Activated naive CD4-positive, alpha-beta T cell treated with anti-CD3 and anti-CD28 coated beads for 36 hours (primary cell): ENCODE measurements at regions of chr14 and their contacts with region 1.

Region 1: DNA sequence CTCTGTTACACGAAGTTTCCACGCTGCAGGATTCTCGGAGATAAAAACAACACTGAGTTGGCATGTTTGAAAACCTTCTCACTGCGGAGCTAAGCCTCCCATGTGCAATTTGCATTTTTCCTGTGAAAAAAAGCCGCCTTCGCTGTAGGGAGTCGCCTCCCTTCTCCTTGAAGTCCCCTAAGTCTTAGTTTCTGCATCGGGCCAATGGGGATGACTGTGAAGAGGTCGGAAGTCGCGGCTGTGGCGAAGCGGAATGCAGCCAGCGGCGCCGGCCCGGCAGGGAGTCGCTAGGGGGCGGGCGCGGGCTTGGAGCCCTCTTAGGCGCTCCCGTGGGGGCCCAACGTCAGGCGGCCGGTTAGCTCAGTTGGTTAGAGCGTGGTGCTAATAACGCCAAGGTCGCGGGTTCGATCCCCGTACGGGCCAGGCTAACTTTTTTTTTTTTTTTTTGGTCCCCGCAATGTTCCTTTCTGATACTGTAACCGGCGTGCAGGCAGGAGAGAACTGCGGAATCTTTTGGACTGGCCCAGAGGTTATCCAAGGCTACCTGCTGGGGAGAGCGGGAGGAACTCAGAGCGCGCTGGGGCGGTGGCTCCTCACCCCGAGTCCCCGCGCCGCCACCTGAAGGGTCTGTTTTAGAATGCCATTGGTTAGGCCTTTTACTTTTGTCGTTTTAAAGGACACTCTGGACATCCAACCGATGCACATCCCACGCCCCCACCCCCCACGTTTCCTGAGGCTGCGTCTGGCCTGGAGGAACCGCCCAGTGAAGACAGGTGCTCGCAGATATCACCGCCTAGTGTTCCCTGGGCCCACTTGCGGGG is 2.6 kb upstream of the ZNF839 start:
- DNase-seq: peak; percentile 95
- H3K4me3 Mint-ChIP-seq: peak overlapping the region; percentile 95
- H3K27ac Mint-ChIP-seq: peak overlapping the region; percentile 98
- H3K4me1 Mint-ChIP-seq: peaks cover 56% of the 10 kb centered on the region
- H3K27me3 Mint-ChIP-seq: no peaks in the 10 kb centered on the region

Region 2: DNA sequence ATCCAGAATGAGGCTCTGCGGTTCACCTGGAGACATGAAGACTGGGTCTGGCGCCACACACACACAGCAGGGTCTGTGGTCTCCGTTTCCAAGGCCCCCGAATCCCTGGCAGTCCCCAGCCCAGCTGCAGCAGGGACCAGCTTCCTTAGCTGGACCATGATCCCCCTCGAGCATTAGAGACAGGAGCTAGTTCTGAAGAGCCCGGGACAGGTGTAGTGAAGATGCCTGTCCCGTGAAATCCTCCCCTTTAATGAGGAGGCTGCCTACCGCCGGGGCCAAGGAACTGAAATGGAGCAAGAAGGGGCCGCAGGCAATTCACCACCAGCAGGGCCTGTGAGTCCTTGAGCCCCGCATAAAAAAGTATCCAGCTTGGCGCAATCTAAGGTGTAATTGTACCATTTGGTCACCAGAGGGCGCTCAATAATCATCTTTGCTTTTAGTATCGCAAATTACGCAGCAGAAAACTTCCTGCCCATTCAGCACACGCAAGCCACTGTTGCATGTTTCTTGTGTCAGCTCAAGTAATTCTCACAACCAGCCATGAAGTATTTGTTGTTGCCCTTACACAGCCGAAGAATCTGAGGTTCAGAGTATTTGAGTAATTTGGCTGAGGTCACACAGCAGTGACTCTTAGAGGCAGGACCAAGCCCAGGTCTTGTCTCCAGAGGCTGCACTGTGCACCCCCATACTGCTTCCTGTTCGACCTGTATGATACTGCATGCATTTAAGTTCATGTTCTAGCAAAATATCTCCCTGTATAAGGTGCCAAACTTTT is 609.7 kb before region 1 on chr14:
- CTCF ChIA-PET with region 1: interaction called, 3 read pairs
- intact Hi-C with region 1: loop called (anchors 1 kb)
- DNase-seq: peak; percentile 76
- H3K4me3 Mint-ChIP-seq: peak overlapping the region; percentile 49
- H3K27ac Mint-ChIP-seq: peak overlapping the region; percentile 78
- H3K4me1 Mint-ChIP-seq: peaks cover 27% of the 10 kb centered on the region
- H3K27me3 Mint-ChIP-seq: no peaks in the 10 kb centered on the region

Region 3: GRCh38 chr14:101947906-101948665 is 368.9 kb before region 1 on chr14:
- CTCF ChIA-PET with region 1: interaction called, 4 read pairs
- intact Hi-C with region 1: loop called (anchors 1 kb)
- DNase-seq: peak; percentile 100
- H3K4me3 Mint-ChIP-seq: peak overlapping the region; percentile 98
- H3K27ac Mint-ChIP-seq: peak overlapping the region; percentile 97
- H3K4me1 Mint-ChIP-seq: peaks cover 18% of the 10 kb centered on the region
- H3K27me3 Mint-ChIP-seq: peaks cover 20% of the 10 kb centered on the region

Region 4: DNA sequence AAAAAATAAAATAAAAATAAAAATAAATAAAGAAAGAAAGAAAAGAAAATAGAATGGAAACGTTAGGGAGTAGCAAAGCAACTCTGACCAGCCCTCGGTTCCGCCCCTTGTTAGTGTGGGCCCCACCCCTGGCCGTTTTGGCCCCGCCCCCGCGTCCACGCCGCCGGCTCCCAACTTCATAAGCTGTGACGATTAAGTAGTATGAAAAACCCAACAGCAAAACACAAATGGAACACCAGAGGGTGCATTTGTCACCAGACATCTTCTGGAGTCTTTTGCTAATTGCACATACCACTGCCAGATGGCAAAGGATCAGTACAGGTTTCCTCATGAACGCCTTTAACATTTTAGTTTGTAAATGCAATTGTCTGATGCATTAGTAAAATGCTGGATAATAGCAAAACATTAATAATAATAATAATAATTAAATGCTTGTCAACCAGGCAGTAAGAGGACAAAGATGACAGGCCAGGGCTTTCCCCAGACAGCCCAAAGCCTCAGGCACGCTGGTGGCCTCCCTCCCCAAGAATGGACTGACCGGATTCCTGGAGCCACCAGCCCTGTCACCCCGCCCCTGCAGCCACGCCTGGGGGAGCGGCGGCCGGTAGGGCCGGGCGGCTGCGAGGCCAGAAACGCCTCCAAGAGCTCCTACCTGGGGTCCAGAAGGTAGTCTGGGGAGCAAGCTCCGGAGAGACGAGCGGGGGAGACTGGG is 253.7 kb before region 1 on chr14:
- CTCF ChIA-PET with region 1: interaction called, 5 read pairs
- intact Hi-C with region 1: loop called (anchors 2 kb)
- DNase-seq: peak; percentile 71
- H3K4me3 Mint-ChIP-seq: no peak overlapping the region
- H3K27ac Mint-ChIP-seq: no peak overlapping the region
- H3K4me1 Mint-ChIP-seq: no peaks in the 10 kb centered on the region
- H3K27me3 Mint-ChIP-seq: no peaks in the 10 kb centered on the region

Region 5: DNA sequence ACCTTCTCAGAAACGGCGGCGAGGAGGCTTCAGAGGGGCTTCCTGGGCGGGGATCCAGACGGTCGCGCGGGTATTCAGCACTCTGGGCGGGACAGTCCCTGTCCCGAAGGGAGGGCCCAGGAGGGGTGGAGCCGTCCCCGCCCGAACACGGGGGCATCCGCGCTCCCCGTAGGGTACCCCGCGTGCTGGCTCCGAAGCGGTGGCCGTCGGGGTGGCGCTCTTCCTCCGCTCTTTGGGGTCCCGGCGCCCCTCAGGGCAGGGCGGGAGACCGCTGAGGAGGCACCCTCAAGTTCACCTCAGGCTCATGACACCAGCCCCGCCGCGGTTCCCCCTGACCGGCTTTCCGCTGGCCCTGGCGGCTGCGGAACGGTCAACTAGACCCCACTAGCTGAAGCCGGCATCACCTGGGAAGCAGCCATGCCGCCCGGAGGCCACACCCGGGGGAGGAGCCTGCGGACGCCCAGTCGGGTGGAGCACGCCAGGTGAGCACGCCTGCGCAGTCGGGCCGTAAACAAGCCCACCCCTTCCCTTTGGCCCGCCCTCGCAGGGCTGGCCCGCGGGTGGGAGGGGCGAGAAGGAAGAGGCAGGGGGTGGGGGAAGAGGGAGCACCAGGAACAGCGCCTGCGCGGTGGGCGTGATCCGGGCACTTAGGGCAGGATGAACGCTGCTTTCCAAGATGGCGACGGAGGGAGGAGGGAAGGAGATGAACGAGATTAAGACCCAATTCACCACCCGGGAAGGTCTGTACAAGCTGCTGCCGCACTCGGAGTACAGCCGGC is 177.5 kb before region 1 on chr14 and contains the start of gene WDR20:
- CTCF ChIA-PET with region 1: interaction called, 3 read pairs
- intact Hi-C with region 1: loop called (anchors 1 kb)
- DNase-seq: peak; percentile 99
- H3K4me3 Mint-ChIP-seq: peak within 1 kb of the TSS; percentile 95
- H3K27ac Mint-ChIP-seq: peak within 1 kb of the TSS; percentile 94
- H3K4me1 Mint-ChIP-seq: peaks cover 24% of the 10 kb centered on the region
- H3K27me3 Mint-ChIP-seq: no peaks in the 10 kb centered on the region
- total RNA-seq, gene WDR20: 20.5 to 21.4 TPM

Region 6: GRCh38 chr14:102279688-102280348 is 37.1 kb before region 1 on chr14:
- CTCF ChIA-PET with region 1: no interaction called
- intact Hi-C with region 1: no loop called
- DNase-seq: peak; percentile 46
- H3K4me3 Mint-ChIP-seq: no peak overlapping the region
- H3K27ac Mint-ChIP-seq: no peak overlapping the region
- H3K4me1 Mint-ChIP-seq: peaks cover 3% of the 10 kb centered on the region
- H3K27me3 Mint-ChIP-seq: no peaks in the 10 kb centered on the region

Region 7: GRCh38 chr14:102362545-102363181 is 45.7 kb after region 1 on chr14 and contains the starts of genes CINP and TECPR2:
- CTCF ChIA-PET with region 1: interaction called, 4 read pairs
- intact Hi-C with region 1: loop called (anchors 1 kb)
- DNase-seq: peak; percentile 99
- H3K4me3 Mint-ChIP-seq: no peak within 1 kb of the TSS
- H3K27ac Mint-ChIP-seq: peak within 1 kb of the TSS; percentile 94
- H3K4me1 Mint-ChIP-seq: peaks cover 30% of the 10 kb centered on the region
- H3K27me3 Mint-ChIP-seq: no peaks in the 10 kb centered on the region
- total RNA-seq, gene CINP: 45.3 to 46.2 TPM
- total RNA-seq, gene TECPR2: 2.3 to 3.6 TPM

Region 8: GRCh38 chr14:102516531-102517415 is 199.8 kb after region 1 on chr14:
- CTCF ChIA-PET with region 1: interaction called, 16 read pairs
- intact Hi-C with region 1: loop called (anchors 1 kb)
- DNase-seq: peak; percentile 48
- H3K4me3 Mint-ChIP-seq: peak overlapping the region; percentile 70
- H3K27ac Mint-ChIP-seq: no peak overlapping the region
- H3K4me1 Mint-ChIP-seq: peaks cover 5% of the 10 kb centered on the region
- H3K27me3 Mint-ChIP-seq: peaks cover 3% of the 10 kb centered on the region

Region 9: GRCh38 chr14:102696856-102697495 is 380.0 kb after region 1 on chr14:
- CTCF ChIA-PET with region 1: no interaction called
- intact Hi-C with region 1: no loop called
- DNase-seq: no peak
- H3K4me3 Mint-ChIP-seq: no peak overlapping the region
- H3K27ac Mint-ChIP-seq: no peak overlapping the region
- H3K4me1 Mint-ChIP-seq: peaks cover 19% of the 10 kb centered on the region
- H3K27me3 Mint-ChIP-seq: no peaks in the 10 kb centered on the region